ENCODE measurements at regions of chr11 and their contacts with region 1.

Region 1: GRCh38 chr11:60985991-60986915 is 14.8 kb downstream of the CD6 start:
- DNase-seq: peak; percentile 79 to 89
- H3K4me3 ChIP-seq: no peak overlapping the region; the same call in 1 of the 2 replicates
- H3K27ac ChIP-seq: peak overlapping the region; percentile 39
- H3K4me1 ChIP-seq: peaks cover 17% of the 10 kb centered on the region
- H3K27me3 ChIP-seq: 0 out of 2 replicates have a peak, but pooled peaks cover 5% of the 10 kb centered on the region
- CTCF ChIP-seq: no peak

Region 2: GRCh38 chr11:60528934-60529333 is 457.3 kb before region 1 on chr11:
- CTCF ChIA-PET with region 1: no interaction called
- POLR2A ChIA-PET with region 1: no interaction called
- intact Hi-C with region 1: no loop called
- DNase-seq: no peak
- H3K4me3 ChIP-seq: no peak overlapping the region
- H3K27ac ChIP-seq: no peak overlapping the region
- H3K4me1 ChIP-seq: no peaks in the 10 kb centered on the region
- H3K27me3 ChIP-seq: peaks cover 9% of the 10 kb centered on the region; the same call in 1 of the 2 replicates
- CTCF ChIP-seq: no peak

Region 3: GRCh38 chr11:60797846-60798630 is 188.2 kb before region 1 on chr11:
- CTCF ChIA-PET with region 1: no interaction called
- POLR2A ChIA-PET with region 1: no interaction called
- intact Hi-C with region 1: no loop called
- DNase-seq: no peak
- H3K4me3 ChIP-seq: no peak overlapping the region
- H3K27ac ChIP-seq: no peak overlapping the region
- H3K4me1 ChIP-seq: no peaks in the 10 kb centered on the region
- H3K27me3 ChIP-seq: peaks cover 96% of the 10 kb centered on the region
- CTCF ChIP-seq: no peak

Region 4: GRCh38 chr11:61071208-61071681 is 85.0 kb after region 1 on chr11:
- CTCF ChIA-PET with region 1: no interaction called
- POLR2A ChIA-PET with region 1: no interaction called
- intact Hi-C with region 1: no loop called
- DNase-seq: no peak
- H3K4me3 ChIP-seq: no peak overlapping the region
- H3K27ac ChIP-seq: no peak overlapping the region
- H3K4me1 ChIP-seq: peaks cover 12% of the 10 kb centered on the region; the same call in 1 of the 2 replicates
- H3K27me3 ChIP-seq: no peaks in the 10 kb centered on the region
- CTCF ChIP-seq: no peak

Region 5: DNA sequence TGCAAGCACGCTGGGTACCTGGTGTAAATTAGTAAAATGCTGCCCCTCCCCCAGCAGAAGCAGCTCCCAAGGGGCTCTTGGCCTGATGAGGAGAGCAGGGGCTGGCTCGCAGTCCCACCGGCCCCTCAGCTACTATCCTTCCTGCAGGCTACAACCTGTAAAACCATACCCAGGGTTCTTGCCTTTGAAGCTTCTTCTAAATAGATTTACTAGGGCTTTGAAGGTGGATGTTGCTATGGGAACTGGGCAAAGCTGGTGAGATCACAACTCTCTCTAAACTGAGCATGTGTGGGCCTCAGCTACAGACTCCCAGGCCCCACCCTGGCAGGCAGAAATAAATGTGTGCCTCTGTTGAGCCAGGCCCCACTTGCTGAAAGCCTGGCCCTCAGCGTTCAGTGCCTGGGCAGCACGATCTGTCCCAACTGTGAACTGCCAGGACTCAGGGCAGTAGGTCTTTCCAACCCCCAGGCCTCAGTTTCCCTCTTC is 134.5 kb after region 1 on chr11:
- CTCF ChIA-PET with region 1: no interaction called
- POLR2A ChIA-PET with region 1: no interaction called
- intact Hi-C with region 1: loop called (anchors 5 kb)
- DNase-seq: peak in 1 of 2 experiments; percentile 25
- H3K4me3 ChIP-seq: no peak overlapping the region
- H3K27ac ChIP-seq: no peak overlapping the region
- H3K4me1 ChIP-seq: peaks cover 14% of the 10 kb centered on the region; the same call in 1 of the 2 replicates
- H3K27me3 ChIP-seq: no peaks in the 10 kb centered on the region
- CTCF ChIP-seq: no peak

Measured in PC-9 (cell line).